ENCODE measurements at regions of chr10 and their contacts with region 1.

Region 1: GRCh38 chr10:72240371-72240770 is 24.3 kb upstream of the ASCC1 start:
- DNase-seq: no peak
- H3K4me3 Mint-ChIP-seq: no peak overlapping the region
- H3K27ac Mint-ChIP-seq: no peak overlapping the region
- H3K4me1 Mint-ChIP-seq: peaks cover 52% of the 10 kb centered on the region
- H3K27me3 Mint-ChIP-seq: no peaks in the 10 kb centered on the region

Region 2: GRCh38 chr10:72186258-72186981 is 54.0 kb before region 1 on chr10:
- CTCF ChIA-PET with region 1: no interaction called
- DNase-seq: no peak
- H3K4me3 Mint-ChIP-seq: no peak overlapping the region
- H3K27ac Mint-ChIP-seq: no peak overlapping the region
- H3K4me1 Mint-ChIP-seq: peaks cover 8% of the 10 kb centered on the region
- H3K27me3 Mint-ChIP-seq: no peaks in the 10 kb centered on the region

Region 3: DNA sequence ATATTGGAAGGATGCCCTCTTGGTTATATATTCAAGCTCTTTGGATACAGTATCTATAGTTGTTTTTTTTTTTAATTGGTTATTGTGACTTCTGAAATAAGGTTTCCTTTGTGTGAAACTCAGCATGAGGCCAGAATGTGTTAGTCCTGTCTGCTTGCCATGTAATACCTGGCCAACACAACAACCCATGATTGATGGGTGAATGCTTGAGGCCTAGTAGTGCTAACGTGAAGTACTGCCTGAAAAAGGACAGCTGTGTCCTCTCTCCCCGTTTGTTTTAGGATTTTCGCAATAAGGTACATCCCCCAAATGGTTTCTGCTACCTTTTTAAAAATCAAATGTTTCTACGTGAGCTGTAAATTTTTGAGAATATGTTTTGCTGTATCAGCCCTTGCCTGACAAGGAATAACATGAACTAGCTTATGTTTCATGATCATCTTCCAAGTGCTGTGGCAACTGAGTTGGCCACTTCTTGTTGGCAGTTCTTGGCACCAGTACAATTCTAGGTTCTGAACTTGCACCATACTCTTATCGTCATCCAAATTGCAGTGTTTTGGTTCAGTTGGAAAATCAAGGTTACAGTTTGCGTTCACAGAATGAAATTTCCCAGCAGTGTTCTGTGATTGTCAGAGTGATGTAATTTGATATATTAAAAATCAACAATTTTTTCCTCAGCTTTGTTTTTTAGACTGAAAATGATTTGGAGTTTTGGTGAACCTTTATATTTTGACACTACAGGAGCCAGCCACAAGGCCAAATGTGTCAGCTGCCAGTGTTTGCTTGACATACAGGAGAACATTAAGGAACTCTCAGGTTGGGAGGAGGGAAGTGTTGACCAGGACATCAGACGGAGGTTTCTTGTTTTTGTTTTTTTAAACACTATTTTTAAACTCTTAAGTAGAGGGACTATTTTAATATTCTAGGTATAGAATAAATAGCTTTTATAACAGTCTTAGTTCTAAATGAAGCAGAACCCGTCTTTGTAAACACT is 10.8 kb before region 1 on chr10:
- CTCF ChIA-PET with region 1: interaction called, 10 read pairs
- DNase-seq: no peak
- H3K4me3 Mint-ChIP-seq: no peak overlapping the region
- H3K27ac Mint-ChIP-seq: peak overlapping the region; percentile 64
- H3K4me1 Mint-ChIP-seq: peaks cover 32% of the 10 kb centered on the region
- H3K27me3 Mint-ChIP-seq: no peaks in the 10 kb centered on the region